Endothelial cell of umbilical vein (primary cell): ENCODE measurements at regions of chr16 and their contacts with region 1.

Region 1: GRCh38 chr16:75471723-75472633 is 7.5 kb upstream of the TMEM170A start:
- DNase-seq: peak; percentile 67
- H3K4me3 ChIP-seq: no peak overlapping the region
- H3K27ac ChIP-seq: no peak overlapping the region
- H3K4me1 ChIP-seq: no peaks in the 10 kb centered on the region
- H3K27me3 ChIP-seq: no peaks in the 10 kb centered on the region
- CTCF ChIP-seq: peak; percentile 65 to 74
- POLR2A ChIP-seq: no peak

Region 2: DNA sequence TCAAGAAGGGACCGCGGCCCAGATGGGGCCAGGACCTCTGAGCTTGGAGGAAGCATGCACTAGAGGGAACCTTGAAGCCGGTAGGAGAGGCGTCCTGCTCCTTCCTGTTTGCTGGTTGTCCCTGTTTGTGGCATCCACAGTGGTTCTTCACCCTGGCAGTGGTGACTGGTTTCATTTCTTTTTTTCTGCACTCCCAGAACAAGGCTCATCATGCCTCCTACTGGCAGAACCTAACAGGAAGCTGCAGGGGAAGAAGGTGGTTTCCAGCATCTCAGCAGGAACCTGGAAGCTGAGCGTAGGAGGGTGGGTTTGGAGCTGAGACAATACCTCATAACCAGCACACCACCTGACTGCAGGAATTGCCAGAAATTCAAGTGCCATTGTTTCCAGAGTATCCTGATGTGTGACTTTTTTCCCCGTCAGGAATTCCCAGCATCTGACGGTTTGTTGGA is 78.3 kb after region 1 on chr16:
- CTCF ChIA-PET with region 1: interaction called, 18 read pairs
- POLR2A ChIA-PET with region 1: no interaction called
- dilution Hi-C with region 1: no loop called
- intact Hi-C with region 1: loop called (anchors 1 kb)
- DNase-seq: peak; percentile 52
- H3K4me3 ChIP-seq: no peak overlapping the region
- H3K27ac ChIP-seq: no peak overlapping the region
- H3K4me1 ChIP-seq: peaks cover 12% of the 10 kb centered on the region
- H3K27me3 ChIP-seq: no peaks in the 10 kb centered on the region
- CTCF ChIP-seq: peak; percentile 47 to 48
- POLR2A ChIP-seq: no peak

Region 3: DNA sequence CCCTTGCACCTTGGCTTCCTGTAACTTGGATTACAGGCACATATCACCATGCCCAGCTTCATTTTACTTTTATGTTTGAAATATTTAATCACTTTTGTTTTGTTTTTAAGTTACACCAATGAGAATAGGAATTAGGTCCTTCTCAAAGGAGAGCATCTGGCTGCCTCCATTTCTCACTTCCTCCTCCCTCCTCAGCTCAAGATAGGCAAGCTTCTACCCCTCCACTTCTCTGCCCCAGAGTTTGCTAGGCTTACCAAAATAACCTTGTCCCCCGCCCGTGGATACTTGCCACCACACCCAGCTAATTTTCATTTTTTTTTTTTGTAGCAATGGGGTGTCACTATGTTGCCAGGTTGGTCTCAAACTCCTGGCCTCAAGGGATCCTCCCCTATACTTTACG is 112.1 kb after region 1 on chr16:
- CTCF ChIA-PET with region 1: no interaction called
- POLR2A ChIA-PET with region 1: no interaction called
- dilution Hi-C with region 1: no loop called
- intact Hi-C with region 1: no loop called
- DNase-seq: no peak
- H3K4me3 ChIP-seq: no peak overlapping the region
- H3K27ac ChIP-seq: no peak overlapping the region
- H3K4me1 ChIP-seq: no peaks in the 10 kb centered on the region
- H3K27me3 ChIP-seq: no peaks in the 10 kb centered on the region
- CTCF ChIP-seq: no peak
- POLR2A ChIP-seq: no peak

Region 4: GRCh38 chr16:75764154-75764768 is 292.3 kb after region 1 on chr16:
- CTCF ChIA-PET with region 1: interaction called, 74 read pairs
- POLR2A ChIA-PET with region 1: no interaction called
- dilution Hi-C with region 1: no loop called
- intact Hi-C with region 1: loop called (anchors 1 kb)
- DNase-seq: peak; percentile 64
- H3K4me3 ChIP-seq: no peak overlapping the region
- H3K27ac ChIP-seq: no peak overlapping the region
- H3K4me1 ChIP-seq: no peaks in the 10 kb centered on the region
- H3K27me3 ChIP-seq: peaks cover 0 to 4% of the 10 kb centered on the region in 2 experiments
- CTCF ChIP-seq: peak; percentile 60 to 68
- POLR2A ChIP-seq: no peak